ENCODE measurements at regions of chr9 and their contacts with region 1.

Region 1: GRCh38 chr9:73615557-73615956 is 463.9 kb downstream of the ANXA1 start:
- DNase-seq: no peak
- H3K4me3 Mint-ChIP-seq: no peak overlapping the region
- H3K27ac Mint-ChIP-seq: no peak overlapping the region
- H3K4me1 Mint-ChIP-seq: no peaks in the 10 kb centered on the region
- H3K27me3 Mint-ChIP-seq: no peaks in the 10 kb centered on the region

Region 2: DNA sequence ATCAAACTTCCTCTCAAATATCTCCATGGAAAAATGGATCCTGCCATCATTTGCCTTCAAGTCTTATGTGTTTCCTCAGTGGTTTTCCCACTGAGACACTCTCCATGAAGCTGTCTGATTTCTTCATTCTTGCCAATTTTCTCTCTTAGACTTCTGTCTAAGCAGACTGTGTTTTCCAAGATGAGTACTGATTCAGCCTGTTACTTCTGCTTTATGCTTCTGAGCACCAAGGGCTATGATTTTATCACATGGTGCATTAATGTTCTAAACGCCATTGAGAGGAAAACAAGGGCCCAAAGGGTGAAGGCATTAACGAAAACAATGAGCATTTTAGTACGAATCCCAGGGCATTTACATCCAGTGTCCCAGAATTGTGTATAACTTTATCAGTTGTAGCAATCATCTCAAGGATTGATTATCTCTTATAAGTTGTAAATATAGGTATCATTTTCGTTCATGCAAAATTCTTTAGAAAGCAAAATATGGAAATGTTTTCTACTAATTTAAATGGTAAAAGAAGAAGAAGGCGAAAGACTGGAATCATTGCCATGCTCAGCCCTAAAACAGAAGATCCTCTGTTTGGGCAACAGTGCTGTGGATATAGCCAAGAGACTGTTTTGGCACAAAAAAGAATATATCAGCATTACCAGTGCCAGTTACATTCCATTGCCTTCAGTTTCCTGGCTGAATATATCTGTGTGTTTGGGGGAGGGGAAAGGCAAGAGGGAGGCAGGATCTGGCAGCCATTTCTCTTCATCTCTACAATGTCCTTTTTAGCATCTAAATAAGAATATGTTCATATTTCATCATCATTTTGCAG is 73.7 kb after region 1 on chr9:
- CTCF ChIA-PET with region 1: no interaction called
- intact Hi-C with region 1: loop called (anchors 10 kb)
- DNase-seq: no peak
- H3K4me3 Mint-ChIP-seq: no peak overlapping the region
- H3K27ac Mint-ChIP-seq: no peak overlapping the region
- H3K4me1 Mint-ChIP-seq: no peaks in the 10 kb centered on the region
- H3K27me3 Mint-ChIP-seq: no peaks in the 10 kb centered on the region

Measured in activated naive CD4-positive, alpha-beta T cell treated with anti-CD3 and anti-CD28 coated beads for 36 hours (primary cell).